Activated CD8-positive, alpha-beta T cell treated with anti-CD3 and anti-CD28 coated beads for 36 hours (primary cell): ENCODE measurements at regions of chrX and their contacts with region 1.

Region 1: GRCh38 chrX:101415180-101416145 is 7.4 kb downstream of the HNRNPH2 start:
- DNase-seq: peak; percentile 30
- ATAC-seq: peak; percentile 74
- H3K4me3 Mint-ChIP-seq: peak overlapping the region; percentile 43
- H3K27ac Mint-ChIP-seq: peak overlapping the region; percentile 91
- H3K4me1 Mint-ChIP-seq: peaks cover 61% of the 10 kb centered on the region
- H3K27me3 Mint-ChIP-seq: no peaks in the 10 kb centered on the region
- CTCF ChIP-seq: peak; percentile 60

Region 2: DNA sequence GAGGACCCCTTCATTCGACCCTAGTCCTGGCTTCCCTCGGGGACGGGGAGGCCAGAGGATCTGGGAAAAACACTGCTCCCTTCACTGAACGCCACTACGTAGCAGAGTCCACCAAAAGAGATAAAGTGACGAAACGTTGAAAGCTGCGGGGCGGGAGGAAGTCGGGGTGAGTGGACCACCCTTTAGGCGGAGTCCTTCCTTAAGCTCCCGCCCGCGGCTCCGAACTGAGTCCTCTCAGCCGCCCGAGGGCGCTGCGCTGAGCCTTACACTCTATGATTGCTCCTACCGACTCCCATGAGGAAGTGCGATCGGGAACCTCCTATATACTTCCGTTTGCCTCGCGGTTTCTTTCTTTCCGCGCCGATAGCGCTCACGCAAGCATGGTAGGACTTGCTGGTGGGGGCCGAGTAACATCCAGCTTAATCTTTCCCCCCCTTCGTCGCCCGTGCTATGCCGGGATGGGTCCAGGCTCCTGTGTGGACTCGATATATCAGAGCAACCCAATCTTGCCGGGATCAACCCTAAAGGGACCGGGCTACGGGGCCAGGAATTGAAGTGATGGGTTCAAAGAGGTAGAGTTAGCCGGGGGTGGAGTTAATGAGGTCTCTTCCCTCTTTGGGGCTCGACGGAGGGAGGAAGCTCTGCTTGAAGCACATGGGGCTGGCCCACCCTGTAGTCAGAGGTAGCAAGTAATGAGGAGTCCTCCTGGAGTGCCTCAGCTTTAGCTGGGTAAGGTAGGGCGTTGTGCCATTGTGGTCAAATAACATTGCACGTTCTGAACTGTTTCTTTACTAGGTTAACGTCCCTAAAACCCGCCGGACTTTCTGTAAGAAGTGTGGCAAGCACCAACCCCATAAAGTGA is 24.6 kb before region 1 on chrX and contains the start of gene RPL36A:
- CTCF ChIA-PET with region 1: interaction called, 5 read pairs
- POLR2A ChIA-PET with region 1: interaction called, 23 read pairs
- intact Hi-C with region 1: no loop called
- DNase-seq: peak; percentile 91
- ATAC-seq: peak; percentile 97
- H3K4me3 Mint-ChIP-seq: peak within 1 kb of the TSS; percentile 95
- H3K27ac Mint-ChIP-seq: peak within 1 kb of the TSS; percentile 97
- H3K4me1 Mint-ChIP-seq: peaks cover 17% of the 10 kb centered on the region
- H3K27me3 Mint-ChIP-seq: no peaks in the 10 kb centered on the region
- CTCF ChIP-seq: peak; percentile 47
- total RNA-seq, gene RPL36A: 264 to 302 TPM

Region 3: GRCh38 chrX:101595739-101596419 is 180.4 kb after region 1 on chrX:
- CTCF ChIA-PET with region 1: interaction called, 3 read pairs
- POLR2A ChIA-PET with region 1: no interaction called
- intact Hi-C with region 1: loop called (anchors 10 kb)
- DNase-seq: peak; percentile 23
- ATAC-seq: peak; percentile 80
- H3K4me3 Mint-ChIP-seq: no peak overlapping the region
- H3K27ac Mint-ChIP-seq: no peak overlapping the region
- H3K4me1 Mint-ChIP-seq: no peaks in the 10 kb centered on the region
- H3K27me3 Mint-ChIP-seq: peaks cover 7% of the 10 kb centered on the region
- CTCF ChIP-seq: peak; percentile 40

Region 4: DNA sequence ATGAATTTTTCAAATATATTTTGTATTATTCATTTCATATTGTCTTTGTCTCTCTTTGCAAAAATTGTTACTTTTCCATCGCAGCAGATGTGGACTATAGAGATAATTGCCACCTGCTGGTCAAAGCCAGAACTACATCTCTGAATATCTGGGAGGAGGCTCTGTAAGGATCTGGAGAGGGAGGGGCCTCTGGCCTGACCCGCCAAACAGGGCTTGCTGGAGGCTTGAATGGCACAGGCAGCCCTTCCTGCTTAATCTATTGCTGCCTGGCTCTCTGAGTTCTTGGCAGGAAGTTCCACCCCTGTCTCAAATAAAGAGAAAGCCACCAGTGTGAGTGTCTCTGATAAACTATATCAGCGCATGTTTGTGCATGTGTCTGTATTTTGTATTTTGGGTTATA is 383.9 kb after region 1 on chrX:
- CTCF ChIA-PET with region 1: no interaction called
- POLR2A ChIA-PET with region 1: no interaction called
- intact Hi-C with region 1: loop called (anchors 2 kb)
- DNase-seq: peak; percentile 89
- ATAC-seq: peak; percentile 100
- H3K4me3 Mint-ChIP-seq: peak overlapping the region; percentile 64
- H3K27ac Mint-ChIP-seq: peak overlapping the region; percentile 52
- H3K4me1 Mint-ChIP-seq: no peaks in the 10 kb centered on the region
- H3K27me3 Mint-ChIP-seq: no peaks in the 10 kb centered on the region
- CTCF ChIP-seq: peak; percentile 60